ENCODE measurements at regions of chrX and their contacts with region 1.

Region 1: GRCh38 chrX:10482261-10482660 is 138.1 kb downstream of the MID1 start:
- DNase-seq: peak; percentile 44
- ATAC-seq: peak; percentile 62

Region 2: DNA sequence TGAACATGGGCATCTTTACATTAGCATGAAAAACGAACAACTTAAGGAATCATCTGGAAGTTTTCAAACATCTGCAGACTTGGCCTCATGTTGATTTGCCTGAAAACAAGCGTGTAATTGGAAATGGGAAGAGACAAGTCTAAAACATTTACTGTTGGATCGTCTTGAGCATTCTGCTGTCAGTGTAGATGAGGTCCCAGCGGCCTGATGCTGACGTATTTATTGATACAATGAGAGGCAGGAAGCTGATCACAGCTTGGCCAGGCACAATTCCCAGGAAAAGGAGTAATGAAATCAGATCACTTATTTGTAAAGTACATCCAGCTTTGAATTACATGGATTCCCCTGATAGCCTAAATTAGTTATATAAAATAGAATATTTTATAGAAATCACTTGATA is 114.9 kb before region 1 on chrX:
- intact Hi-C with region 1: no loop called
- DNase-seq: no peak
- ATAC-seq: no peak

Region 3: DNA sequence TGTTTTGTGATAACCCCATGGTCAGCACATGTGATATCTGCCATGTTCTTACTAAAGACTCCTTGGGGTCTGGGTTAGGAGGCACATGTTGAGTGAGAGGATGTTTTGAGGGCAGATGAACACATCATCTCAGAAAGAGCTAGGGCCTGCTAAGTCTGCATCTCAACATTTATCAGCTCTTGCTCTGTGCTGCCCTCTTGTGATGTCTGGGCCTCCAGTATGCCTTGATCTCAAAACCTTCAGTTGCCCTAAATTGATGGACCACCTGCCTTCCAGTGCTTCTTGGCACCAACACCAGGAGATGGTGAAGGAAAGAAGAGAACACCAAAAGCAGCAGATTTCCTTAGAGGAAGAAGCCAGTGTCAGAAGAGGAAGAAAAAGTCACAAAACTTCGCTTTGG is 115.6 kb after region 1 on chrX:
- intact Hi-C with region 1: loop called (anchors 10 kb)
- DNase-seq: no peak
- ATAC-seq: peak; percentile 25